Psoas muscle (tissue), 8 donors: ENCODE measurements at regions of chr10 and their contacts with region 1.

Region 1: DNA sequence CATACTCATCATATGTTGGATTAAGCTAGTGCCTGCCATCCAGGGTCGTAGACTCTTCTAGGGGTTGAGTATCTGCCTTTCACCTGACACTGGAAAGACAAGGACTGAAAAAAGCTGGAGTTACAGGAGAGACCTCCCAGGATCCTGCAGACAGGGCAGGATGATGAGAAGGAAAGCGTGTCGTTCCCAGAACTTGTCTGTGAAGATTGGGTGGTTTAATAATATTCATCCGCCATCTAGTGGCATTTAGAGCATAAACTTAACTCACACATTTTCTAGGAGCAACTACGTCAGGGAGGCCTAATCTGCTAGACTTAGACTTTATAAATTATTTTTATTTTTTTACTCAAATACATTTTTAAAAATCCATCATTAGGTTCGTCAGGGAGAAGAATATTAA is 59.6 kb downstream of the ADRB1 start:
- DNase-seq: no peak
- ATAC-seq: peak; percentile 64 to 89 (median 70)
- H3K4me3 ChIP-seq: no peak overlapping the region
- H3K27ac ChIP-seq: no peak overlapping the region
- H3K4me1 ChIP-seq: peaks cover 3% of the 10 kb centered on the region
- H3K27me3 ChIP-seq: peaks cover 0 to 17% (median 6%) of the 10 kb centered on the region in 3 donors
- CTCF ChIP-seq: peak; percentile 51

Region 2: GRCh38 chr10:113704637-113705343 is 398.5 kb before region 1 on chr10:
- intact Hi-C with region 1: loop called (anchors 5 to 10 kb)
- DNase-seq: no peak
- ATAC-seq: peak in 2 of 4 donors; percentile 42 to 45
- H3K4me3 ChIP-seq: no peak overlapping the region
- H3K27ac ChIP-seq: no peak overlapping the region
- H3K4me1 ChIP-seq: no peaks in the 10 kb centered on the region
- H3K27me3 ChIP-seq: no peaks in the 10 kb centered on the region
- CTCF ChIP-seq: peak; percentile 58

Region 3: DNA sequence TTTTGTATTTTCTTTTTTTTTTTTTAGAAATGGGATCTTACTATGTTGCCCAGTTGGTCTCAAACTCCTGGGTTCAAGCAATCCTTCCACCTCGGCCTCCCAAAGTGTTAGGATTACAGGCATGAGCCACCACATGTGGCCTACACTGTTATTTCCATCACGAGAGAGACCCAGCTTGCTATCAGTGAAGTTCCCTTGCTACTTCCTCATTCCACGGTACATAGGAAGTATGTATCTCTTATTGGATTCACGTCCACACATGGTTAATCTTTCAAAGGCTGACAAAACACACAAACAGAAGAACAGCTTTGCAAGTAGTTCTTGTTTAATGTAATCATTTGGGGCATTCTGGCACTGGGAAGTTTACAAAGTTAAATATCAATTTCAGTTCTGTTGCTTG is 300.3 kb before region 1 on chr10:
- intact Hi-C with region 1: loop called (anchors 2 kb)
- DNase-seq: no peak
- ATAC-seq: no peak
- H3K4me3 ChIP-seq: no peak overlapping the region
- H3K27ac ChIP-seq: no peak overlapping the region
- H3K4me1 ChIP-seq: no peaks in the 10 kb centered on the region
- H3K27me3 ChIP-seq: no peaks in the 10 kb centered on the region
- CTCF ChIP-seq: no peak

Region 4: DNA sequence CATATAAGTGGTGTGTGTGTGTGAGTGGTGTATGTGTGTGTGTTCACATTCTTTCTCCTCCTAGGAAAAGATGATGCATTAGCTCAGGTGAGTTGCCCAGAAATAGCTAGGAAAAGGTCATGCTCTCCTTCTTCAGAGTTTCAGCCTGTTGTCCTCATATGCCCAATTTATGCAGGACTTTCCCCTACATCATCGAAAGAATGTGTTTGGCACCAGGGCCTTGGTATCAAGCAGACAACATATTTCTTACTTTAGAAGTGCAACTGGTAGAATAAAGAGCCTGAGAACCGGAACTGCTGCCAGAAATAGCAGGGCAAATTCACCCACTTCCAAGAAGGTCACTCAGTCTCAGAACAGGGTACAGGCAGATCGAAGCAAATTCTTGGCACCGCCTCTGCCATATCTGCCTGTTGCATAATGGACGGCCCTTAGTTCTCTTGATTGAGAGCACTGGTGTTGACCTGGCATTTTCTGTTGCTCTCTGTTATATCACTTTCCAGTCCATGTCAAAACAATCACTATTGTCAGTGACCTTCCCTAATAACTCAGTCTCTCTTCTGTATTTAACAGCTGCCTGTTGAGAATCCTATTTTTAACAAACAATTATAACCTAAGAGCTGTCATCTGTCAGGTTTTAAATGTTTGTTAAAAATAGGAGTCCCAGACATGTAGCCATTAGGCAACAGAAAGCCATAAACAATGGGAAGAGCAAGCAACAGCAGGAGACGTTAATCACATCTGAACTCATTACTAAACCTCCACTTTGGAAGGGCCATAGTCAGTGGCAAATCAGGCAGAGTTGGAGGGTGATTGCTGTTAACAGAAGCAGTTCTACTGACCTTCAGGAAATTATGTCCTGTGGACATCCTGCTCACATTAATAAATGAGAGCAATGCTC is 38.9 kb before region 1 on chr10:
- intact Hi-C with region 1: no loop called
- DNase-seq: no peak
- ATAC-seq: peak; percentile 60 to 86 (median 76)
- H3K4me3 ChIP-seq: no peak overlapping the region
- H3K27ac ChIP-seq: peak overlapping the region; percentile 47
- H3K4me1 ChIP-seq: no peaks in the 10 kb centered on the region
- H3K27me3 ChIP-seq: no peaks in the 10 kb centered on the region
- CTCF ChIP-seq: no peak